BJ (cell line): ENCODE measurements at regions of chr12 and their contacts with region 1.

Region 1: DNA sequence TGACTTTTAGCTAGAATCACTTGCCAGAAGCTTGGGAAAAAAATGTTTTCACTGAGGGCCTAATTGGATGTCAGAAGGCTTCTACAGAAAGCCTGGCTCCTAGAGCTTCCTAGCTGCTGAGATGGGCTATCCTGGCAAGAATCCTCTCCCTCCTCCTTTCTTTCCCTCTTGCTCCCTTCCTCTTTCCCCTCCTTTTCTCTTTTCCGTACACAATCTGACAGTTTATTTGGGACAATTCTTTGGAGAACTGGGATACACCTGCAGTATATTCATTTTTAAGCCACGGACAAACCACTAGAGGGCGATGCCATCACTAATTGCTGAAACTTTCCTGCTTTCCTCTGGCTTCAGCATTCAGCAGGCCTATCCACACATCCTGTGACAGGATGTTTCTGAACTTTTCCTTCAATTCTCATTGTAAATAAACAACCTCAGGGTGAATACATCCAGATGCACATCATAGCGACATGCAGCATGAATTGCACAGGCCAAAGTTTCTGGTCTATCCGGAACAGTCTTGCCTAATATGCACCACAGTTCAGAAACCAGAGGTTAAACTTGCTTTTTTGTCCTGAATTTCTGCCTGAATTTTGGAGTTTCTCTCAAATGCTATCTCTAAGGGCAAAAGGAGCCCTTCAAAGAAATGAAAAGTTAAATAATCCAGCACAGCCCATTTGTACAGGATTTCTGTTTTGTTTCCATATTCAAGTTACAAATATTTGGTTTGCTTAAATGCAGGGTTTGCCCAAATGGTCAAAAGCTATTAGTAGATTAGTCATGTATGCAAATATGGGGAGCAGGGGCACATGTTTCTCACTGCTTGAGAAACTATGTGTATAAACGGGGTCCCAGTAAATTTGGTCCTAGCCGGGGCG is 142.8 kb downstream of the PAWR start:
- DNase-seq: peak; percentile 37
- H3K4me3 ChIP-seq: no peak overlapping the region
- H3K27me3 ChIP-seq: no peaks in the 10 kb centered on the region
- CTCF ChIP-seq: peak; percentile 71

Region 2: GRCh38 chr12:79688376-79689060 is 140.5 kb after region 1 on chr12:
- CTCF ChIA-PET with region 1: interaction called, 3 read pairs
- POLR2A ChIA-PET with region 1: interaction called, 10 read pairs
- DNase-seq: no peak
- H3K4me3 ChIP-seq: peak overlapping the region; percentile 98
- H3K27me3 ChIP-seq: no peaks in the 10 kb centered on the region
- CTCF ChIP-seq: no peak

Region 3: DNA sequence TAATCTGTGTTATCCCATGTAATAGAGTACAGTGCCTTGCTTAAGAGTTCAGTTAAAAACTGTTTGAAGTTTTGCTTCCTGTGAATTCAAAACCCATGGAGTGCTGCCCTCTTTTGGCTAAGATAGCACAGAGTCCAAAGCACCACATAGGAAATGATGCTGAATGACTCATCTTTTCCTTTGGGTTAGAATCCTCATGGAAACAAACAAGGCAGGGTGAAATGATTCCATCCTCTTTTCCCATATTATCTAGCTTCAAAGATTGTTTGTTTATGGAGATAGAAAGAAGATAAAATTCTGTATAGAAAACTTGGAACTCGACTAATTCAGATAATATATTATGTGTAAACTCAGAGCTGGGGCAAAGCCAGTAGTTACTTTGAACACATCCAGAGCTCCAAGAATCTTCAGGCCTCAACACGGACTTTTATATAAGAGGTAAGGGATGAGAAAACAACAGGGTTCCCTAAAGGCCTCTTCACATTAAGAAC is 638.8 kb after region 1 on chr12:
- CTCF ChIA-PET with region 1: interaction called, 10 read pairs
- POLR2A ChIA-PET with region 1: no interaction called
- DNase-seq: peak; percentile 72
- H3K4me3 ChIP-seq: no peak overlapping the region
- H3K27me3 ChIP-seq: no peaks in the 10 kb centered on the region
- CTCF ChIP-seq: peak; percentile 83